Breast epithelium (tissue), 4 donors: ENCODE measurements at regions of chr3 and their contacts with region 1.

Region 1: GRCh38 chr3:140441006-140441405 is 236.9 kb upstream of the TRIM42 start:
- DNase-seq: peak in 1 of 2 donors; percentile 63
- H3K4me3 ChIP-seq: no peak overlapping the region
- H3K27ac ChIP-seq: peak overlapping the region; percentile 2 to 38
- H3K4me1 ChIP-seq: no peaks in the 10 kb centered on the region
- H3K27me3 ChIP-seq: no peaks in the 10 kb centered on the region
- CTCF ChIP-seq: peak in 1 of 3 donors; percentile 18
- POLR2A ChIP-seq: no peak

Region 2: GRCh38 chr3:140152851-140153639 is 288.0 kb before region 1 on chr3:
- intact Hi-C with region 1: no loop called
- DNase-seq: no peak
- H3K4me3 ChIP-seq: no peak overlapping the region
- H3K27ac ChIP-seq: no peak overlapping the region
- H3K4me1 ChIP-seq: no peaks in the 10 kb centered on the region
- H3K27me3 ChIP-seq: no peaks in the 10 kb centered on the region
- CTCF ChIP-seq: no peak
- POLR2A ChIP-seq: no peak

Region 3: DNA sequence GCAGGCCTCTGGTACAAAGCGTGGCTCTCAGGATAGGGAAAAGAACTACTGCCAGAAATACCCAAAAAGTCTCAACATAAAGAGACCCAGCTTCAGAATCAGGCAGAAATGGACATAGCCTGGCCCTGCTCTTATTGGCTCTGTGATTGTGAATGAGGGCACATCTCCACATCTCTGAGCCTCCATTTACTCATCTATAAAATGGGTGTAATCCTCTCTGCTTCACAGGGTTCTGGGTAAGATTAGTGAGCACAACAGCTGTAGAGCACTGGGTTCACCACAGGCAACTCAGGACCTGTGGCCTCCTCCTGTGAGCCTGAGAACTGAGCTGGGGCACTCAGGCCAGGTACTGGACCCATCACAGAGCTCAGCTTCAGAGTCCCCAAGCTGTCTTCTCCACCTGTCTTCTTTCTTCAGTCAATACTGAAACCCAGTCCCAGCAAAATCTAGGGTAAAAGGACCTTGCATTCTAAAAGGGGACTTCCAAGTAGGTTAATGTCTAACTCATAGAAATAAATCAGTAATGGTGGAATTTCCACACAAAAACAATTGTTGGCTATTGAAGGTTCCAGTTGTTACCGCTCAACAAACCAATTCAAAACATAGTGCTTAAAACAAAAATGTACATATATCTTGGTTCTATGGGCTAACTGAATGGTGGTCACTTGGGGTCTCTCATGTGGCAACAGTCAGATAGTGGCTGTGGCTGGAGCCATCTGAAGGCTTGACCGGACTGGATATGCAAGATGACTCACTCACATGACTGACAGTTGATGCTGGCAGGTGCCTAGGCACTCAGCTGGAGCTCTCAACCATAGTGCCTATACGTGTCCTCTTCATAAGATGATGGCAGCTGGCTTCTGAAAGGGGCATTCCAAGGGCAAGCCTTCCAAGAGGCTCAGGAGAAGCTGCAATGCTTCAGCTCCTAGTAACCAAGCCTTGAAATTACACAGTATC is 284.1 kb after region 1 on chr3:
- intact Hi-C with region 1: no loop called
- DNase-seq: no peak
- H3K4me3 ChIP-seq: no peak overlapping the region
- H3K27ac ChIP-seq: no peak overlapping the region
- H3K4me1 ChIP-seq: no peaks in the 10 kb centered on the region
- H3K27me3 ChIP-seq: no peaks in the 10 kb centered on the region
- CTCF ChIP-seq: no peak
- POLR2A ChIP-seq: no peak

Region 4: DNA sequence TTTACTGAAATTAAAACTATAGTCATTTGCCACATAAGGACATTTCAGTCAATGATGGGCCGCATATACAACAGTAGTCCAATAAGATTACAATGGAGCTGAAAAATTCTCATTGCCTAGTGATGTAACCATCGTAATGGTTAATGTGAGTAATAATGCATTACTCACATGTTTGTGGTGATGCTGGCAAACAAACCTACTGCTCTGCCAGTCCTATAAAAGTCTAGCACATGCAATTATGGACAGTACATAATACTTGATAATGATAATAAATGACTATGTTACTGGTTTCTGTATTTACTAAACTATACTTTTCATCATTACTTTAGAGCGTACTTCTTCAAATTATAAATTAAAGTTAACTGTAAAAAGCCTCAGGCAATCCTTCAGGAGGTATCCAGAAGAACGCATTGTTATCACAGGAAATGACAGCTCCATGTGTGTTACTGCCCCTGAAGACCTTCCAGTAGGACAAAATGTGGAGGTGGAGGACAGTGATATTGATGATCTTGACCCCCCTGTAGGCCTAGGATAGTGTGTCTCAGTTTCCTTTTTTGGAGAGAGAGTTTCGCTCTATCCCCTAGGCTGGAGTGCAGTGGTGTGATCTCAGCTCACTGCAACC is 1538.2 kb after region 1 on chr3:
- intact Hi-C with region 1: loop called (anchors 10 kb)
- DNase-seq: no peak
- H3K4me3 ChIP-seq: no peak overlapping the region
- H3K27ac ChIP-seq: no peak overlapping the region
- H3K4me1 ChIP-seq: no peaks in the 10 kb centered on the region
- H3K27me3 ChIP-seq: no peaks in the 10 kb centered on the region
- CTCF ChIP-seq: no peak
- POLR2A ChIP-seq: no peak